SK-N-SH (cell line): ENCODE measurements at regions of chr20 and their contacts with region 1.

Region 1: GRCh38 chr20:10427060-10427692 is 6.8 kb downstream of the MKKS start:
- DNase-seq: peak; percentile 51
- H3K4me3 ChIP-seq: no peak overlapping the region; a peak in 1 of 4 replicates
- H3K27ac ChIP-seq: no peak overlapping the region
- H3K4me1 ChIP-seq: peaks cover 5 to 8% of the 10 kb centered on the region in 2 experiments; a peak in 3 of 4 replicates
- H3K27me3 ChIP-seq: no peaks in the 10 kb centered on the region
- CTCF ChIP-seq: peak; percentile 98
- EP300 ChIP-seq: no peak
- RAD21 ChIP-seq: peak; percentile 80

Region 2: DNA sequence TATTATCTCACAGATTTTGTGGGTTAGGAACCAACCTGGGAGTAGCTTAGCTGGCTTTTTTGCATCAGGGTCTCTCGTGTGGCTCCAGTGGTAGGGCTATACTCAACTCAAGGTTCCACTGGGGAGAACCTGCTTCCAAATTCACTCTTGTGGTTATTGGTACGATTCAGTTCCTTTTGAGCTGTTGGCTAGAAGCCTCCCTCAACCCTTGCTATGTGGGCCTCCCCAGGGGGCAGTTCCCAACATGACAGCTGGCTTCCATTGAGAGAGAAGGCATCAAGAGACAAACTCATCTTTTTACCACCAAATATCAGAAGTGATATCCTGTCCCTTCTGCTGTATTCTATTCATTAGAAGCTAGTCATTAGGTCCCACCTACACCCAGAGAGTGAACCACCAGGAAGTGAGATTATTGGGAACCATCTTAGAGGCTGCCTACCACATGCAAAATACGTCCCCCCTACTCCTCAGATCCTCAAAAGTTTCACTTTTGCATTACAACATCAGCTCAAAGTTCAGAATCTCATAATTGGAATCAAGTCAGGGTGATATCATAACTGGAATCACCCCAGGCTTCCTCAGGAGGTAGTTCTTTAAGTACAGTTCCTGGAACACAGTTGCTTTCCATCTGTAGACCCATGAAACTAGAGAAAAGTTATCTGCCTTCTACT is 24.1 kb before region 1 on chr20:
- CTCF ChIA-PET with region 1: interaction called, 65 read pairs
- POLR2A ChIA-PET with region 1: no interaction called
- DNase-seq: no peak
- H3K4me3 ChIP-seq: no peak overlapping the region
- H3K27ac ChIP-seq: no peak overlapping the region
- H3K4me1 ChIP-seq: no peaks in the 10 kb centered on the region
- H3K27me3 ChIP-seq: no peaks in the 10 kb centered on the region
- CTCF ChIP-seq: no peak
- EP300 ChIP-seq: no peak
- RAD21 ChIP-seq: no peak

Region 3: GRCh38 chr20:10412591-10413408 is 14.4 kb before region 1 on chr20:
- CTCF ChIA-PET with region 1: interaction called, 65 read pairs
- POLR2A ChIA-PET with region 1: no interaction called
- DNase-seq: no peak
- H3K4me3 ChIP-seq: no peak overlapping the region
- H3K27ac ChIP-seq: no peak overlapping the region
- H3K4me1 ChIP-seq: peaks cover 0 to 12% of the 10 kb centered on the region in 2 experiments; a peak in 2 of 4 replicates
- H3K27me3 ChIP-seq: no peaks in the 10 kb centered on the region
- CTCF ChIP-seq: peak; percentile 55
- EP300 ChIP-seq: no peak
- RAD21 ChIP-seq: peak; percentile 64

Region 4: GRCh38 chr20:10447027-10447426 is 19.9 kb after region 1 on chr20:
- CTCF ChIA-PET with region 1: no interaction called
- POLR2A ChIA-PET with region 1: no interaction called
- DNase-seq: peak; percentile 55
- H3K4me3 ChIP-seq: peak overlapping the region in 1 of 2 experiments; percentile 10; a peak in 2 of 4 replicates
- H3K27ac ChIP-seq: peak overlapping the region; percentile 60 to 68; a peak in 3 of 4 replicates
- H3K4me1 ChIP-seq: peaks cover 0 to 22% of the 10 kb centered on the region in 2 experiments; a peak in 2 of 4 replicates
- H3K27me3 ChIP-seq: no peaks in the 10 kb centered on the region
- CTCF ChIP-seq: peak; percentile 14; the same call in 1 of the 2 replicates
- EP300 ChIP-seq: peak in 1 of 2 experiments; percentile 31; a peak in 1 of 4 replicates
- RAD21 ChIP-seq: peak; percentile 15; the same call in 1 of the 2 replicates

Region 5: GRCh38 chr20:10611357-10611756 is 184.2 kb after region 1 on chr20:
- CTCF ChIA-PET with region 1: no interaction called
- POLR2A ChIA-PET with region 1: no interaction called
- DNase-seq: peak; percentile 38
- H3K4me3 ChIP-seq: no peak overlapping the region
- H3K27ac ChIP-seq: peak overlapping the region in 1 of 2 experiments; percentile 98; a peak in 1 of 4 replicates
- H3K4me1 ChIP-seq: peaks cover 10 to 12% of the 10 kb centered on the region in 2 experiments; a peak in 3 of 4 replicates
- H3K27me3 ChIP-seq: no peaks in the 10 kb centered on the region
- CTCF ChIP-seq: peak; percentile 52
- EP300 ChIP-seq: no peak
- RAD21 ChIP-seq: peak; percentile 56